ENCODE measurements at regions of chr1 and their contacts with region 1.

Region 1: GRCh38 chr1:93021539-93022134 is 57.4 kb upstream of the MTF2 start:
- DNase-seq: peak; percentile 57
- H3K4me3 ChIP-seq: no peak overlapping the region
- H3K27ac ChIP-seq: no peak overlapping the region
- H3K4me1 ChIP-seq: peaks cover 2% of the 10 kb centered on the region
- H3K27me3 ChIP-seq: peaks cover 16 to 17% of the 10 kb centered on the region in 2 experiments
- CTCF ChIP-seq: peak; percentile 55 to 59
- POLR2A ChIP-seq: no peak

Region 2: DNA sequence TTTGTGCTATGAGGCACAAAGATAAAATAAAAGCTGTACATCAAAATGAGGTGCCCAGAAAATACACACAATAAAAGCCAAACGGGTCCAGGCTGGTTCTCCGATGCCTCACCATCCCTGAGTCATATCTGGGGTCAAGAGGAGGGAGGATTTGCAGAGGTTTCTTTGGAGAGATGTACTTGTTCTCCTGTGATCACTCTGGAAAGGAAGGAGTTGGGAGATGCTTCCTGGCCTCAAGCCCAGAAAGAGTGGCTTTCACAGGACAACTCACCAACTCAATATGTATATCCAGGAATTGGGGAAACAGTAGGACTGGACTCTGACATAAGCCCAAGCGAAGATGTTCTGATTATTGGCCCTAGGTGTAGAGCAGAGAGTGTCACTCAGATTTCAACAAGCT is 112.3 kb before region 1 on chr1:
- CTCF ChIA-PET with region 1: no interaction called
- POLR2A ChIA-PET with region 1: no interaction called
- dilution Hi-C with region 1: no loop called
- intact Hi-C with region 1: no loop called
- DNase-seq: no peak
- H3K4me3 ChIP-seq: no peak overlapping the region
- H3K27ac ChIP-seq: no peak overlapping the region
- H3K4me1 ChIP-seq: no peaks in the 10 kb centered on the region
- H3K27me3 ChIP-seq: peaks cover 3 to 6% of the 10 kb centered on the region in 2 experiments
- CTCF ChIP-seq: no peak
- POLR2A ChIP-seq: no peak

Region 3: GRCh38 chr1:92987462-92987861 is 34.2 kb before region 1 on chr1:
- CTCF ChIA-PET with region 1: no interaction called
- POLR2A ChIA-PET with region 1: no interaction called
- dilution Hi-C with region 1: no loop called
- intact Hi-C with region 1: no loop called
- DNase-seq: no peak
- H3K4me3 ChIP-seq: no peak overlapping the region
- H3K27ac ChIP-seq: no peak overlapping the region
- H3K4me1 ChIP-seq: no peaks in the 10 kb centered on the region
- H3K27me3 ChIP-seq: no peaks in the 10 kb centered on the region
- CTCF ChIP-seq: no peak
- POLR2A ChIP-seq: no peak

Region 4: GRCh38 chr1:93061895-93062792 is 40.5 kb after region 1 on chr1:
- CTCF ChIA-PET with region 1: interaction called, 23 read pairs
- POLR2A ChIA-PET with region 1: no interaction called
- dilution Hi-C with region 1: no loop called
- intact Hi-C with region 1: loop called (anchors 1 kb)
- DNase-seq: peak; percentile 29
- H3K4me3 ChIP-seq: no peak overlapping the region
- H3K27ac ChIP-seq: no peak overlapping the region
- H3K4me1 ChIP-seq: no peaks in the 10 kb centered on the region
- H3K27me3 ChIP-seq: peaks cover 4 to 14% of the 10 kb centered on the region in 2 experiments
- CTCF ChIP-seq: peak; percentile 39 to 42
- POLR2A ChIP-seq: no peak

Region 5: DNA sequence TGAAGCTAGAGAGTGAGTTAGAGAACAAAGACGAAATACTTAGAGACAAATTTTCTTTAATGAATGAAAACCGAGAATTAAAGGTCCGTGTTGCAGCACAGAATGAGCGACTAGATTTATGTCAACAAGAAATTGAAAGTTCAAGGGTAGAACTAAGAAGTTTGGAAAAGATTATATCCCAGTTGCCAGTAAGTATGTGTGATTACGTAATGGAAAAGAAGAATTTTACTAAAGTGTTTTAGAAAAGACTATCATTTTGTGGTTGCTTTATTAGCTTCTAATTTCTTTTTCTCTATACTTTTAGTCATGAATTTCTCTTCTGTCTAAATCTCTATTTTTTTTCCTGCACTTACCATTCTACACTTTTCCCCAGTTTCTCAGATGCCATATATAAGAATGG is 185.6 kb after region 1 on chr1:
- CTCF ChIA-PET with region 1: no interaction called
- POLR2A ChIA-PET with region 1: no interaction called
- dilution Hi-C with region 1: no loop called
- intact Hi-C with region 1: no loop called
- DNase-seq: no peak
- H3K4me3 ChIP-seq: no peak overlapping the region
- H3K27ac ChIP-seq: no peak overlapping the region
- H3K4me1 ChIP-seq: no peaks in the 10 kb centered on the region
- H3K27me3 ChIP-seq: no peaks in the 10 kb centered on the region
- CTCF ChIP-seq: no peak
- POLR2A ChIP-seq: no peak

Measured in endothelial cell of umbilical vein (primary cell).